T-cell (primary cell): ENCODE measurements at regions of chr5 and their contacts with region 1.

Region 1: GRCh38 chr5:171806976-171807747 is 21.5 kb downstream of the SMIM23 start:
- DNase-seq: no peak
- ATAC-seq: no peak
- H3K4me3 ChIP-seq: no peak overlapping the region
- H3K4me3 Mint-ChIP-seq: peak overlapping the region in 1 of 3 donors; percentile 22
- H3K27ac ChIP-seq: no peak overlapping the region
- H3K27ac Mint-ChIP-seq: no peak overlapping the region
- H3K4me1 ChIP-seq: no peaks in the 10 kb centered on the region
- H3K4me1 Mint-ChIP-seq: peaks cover 1 to 7% (median 5%) of the 10 kb centered on the region in 3 donors
- H3K27me3 ChIP-seq: peaks cover 0 to 28% of the 10 kb centered on the region in 2 experiments
- H3K27me3 Mint-ChIP-seq: peaks cover 40 to 43% of the 10 kb centered on the region in 2 donors

Region 2: GRCh38 chr5:171633816-171634470 is 173.2 kb before region 1 on chr5:
- CTCF ChIA-PET with region 1: no interaction called
- POLR2A ChIA-PET with region 1: no interaction called
- DNase-seq: no peak
- ATAC-seq: no peak
- H3K4me3 ChIP-seq: no peak overlapping the region
- H3K4me3 Mint-ChIP-seq: no peak overlapping the region
- H3K27ac ChIP-seq: no peak overlapping the region
- H3K27ac Mint-ChIP-seq: no peak overlapping the region
- H3K4me1 ChIP-seq: no peaks in the 10 kb centered on the region
- H3K4me1 Mint-ChIP-seq: no peaks in the 10 kb centered on the region
- H3K27me3 ChIP-seq: peaks cover 0 to 19% of the 10 kb centered on the region in 2 experiments
- H3K27me3 Mint-ChIP-seq: peaks cover 28 to 29% of the 10 kb centered on the region in 2 donors

Region 3: DNA sequence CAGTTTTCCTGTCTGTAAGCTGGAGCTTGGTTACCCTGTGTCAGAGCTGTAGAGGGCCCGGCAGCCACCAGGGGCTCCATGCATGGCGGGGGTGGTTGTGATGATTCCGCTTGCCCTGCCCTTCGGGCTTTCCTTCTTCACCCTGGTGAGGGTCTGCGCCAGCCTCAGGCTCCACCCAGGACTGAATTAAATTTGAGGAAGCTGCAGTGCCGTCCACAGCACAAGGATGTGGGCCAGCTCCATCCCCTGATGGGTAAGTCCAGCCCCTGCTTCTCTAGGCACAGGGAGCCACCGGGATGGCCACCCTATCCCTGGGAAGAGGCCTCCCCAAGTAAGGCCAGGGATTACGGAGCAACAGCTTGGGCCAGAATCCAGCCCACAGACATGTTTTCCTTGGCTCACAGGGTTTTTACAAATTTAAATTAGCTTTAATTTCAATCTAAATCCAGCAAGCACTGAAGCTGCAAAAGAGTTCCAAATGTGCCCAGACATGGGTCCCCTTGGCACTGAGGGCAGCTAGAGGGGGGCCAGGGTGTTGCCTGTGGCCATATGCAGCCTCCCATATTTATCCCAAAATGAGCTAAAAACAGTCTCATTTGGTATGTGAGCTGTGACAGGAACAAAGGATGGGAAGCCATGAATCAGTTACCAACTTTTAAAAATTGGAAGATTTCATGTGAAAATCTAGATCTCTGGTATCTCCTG is 288.5 kb after region 1 on chr5:
- CTCF ChIA-PET with region 1: interaction called in 1 of 2 experiments, 10 read pairs
- POLR2A ChIA-PET with region 1: no interaction called
- DNase-seq: no peak
- ATAC-seq: no peak
- H3K4me3 ChIP-seq: no peak overlapping the region
- H3K4me3 Mint-ChIP-seq: no peak overlapping the region
- H3K27ac ChIP-seq: no peak overlapping the region
- H3K27ac Mint-ChIP-seq: peak overlapping the region; percentile 58 to 61
- H3K4me1 ChIP-seq: peaks cover 0 to 11% of the 10 kb centered on the region in 2 experiments
- H3K4me1 Mint-ChIP-seq: peaks cover 11 to 17% (median 12%) of the 10 kb centered on the region in 3 donors
- H3K27me3 ChIP-seq: no peaks in the 10 kb centered on the region
- H3K27me3 Mint-ChIP-seq: no peaks in the 10 kb centered on the region